Astrocyte of the cerebellum (primary cell): ENCODE measurements at regions of chr19 and their contacts with region 1.

Region 1: GRCh38 chr19:11019824-11020223 is 59.0 kb downstream of the SMARCA4 start:
- DNase-seq: no peak
- H3K4me3 ChIP-seq: no peak overlapping the region
- CTCF ChIP-seq: no peak

Region 2: DNA sequence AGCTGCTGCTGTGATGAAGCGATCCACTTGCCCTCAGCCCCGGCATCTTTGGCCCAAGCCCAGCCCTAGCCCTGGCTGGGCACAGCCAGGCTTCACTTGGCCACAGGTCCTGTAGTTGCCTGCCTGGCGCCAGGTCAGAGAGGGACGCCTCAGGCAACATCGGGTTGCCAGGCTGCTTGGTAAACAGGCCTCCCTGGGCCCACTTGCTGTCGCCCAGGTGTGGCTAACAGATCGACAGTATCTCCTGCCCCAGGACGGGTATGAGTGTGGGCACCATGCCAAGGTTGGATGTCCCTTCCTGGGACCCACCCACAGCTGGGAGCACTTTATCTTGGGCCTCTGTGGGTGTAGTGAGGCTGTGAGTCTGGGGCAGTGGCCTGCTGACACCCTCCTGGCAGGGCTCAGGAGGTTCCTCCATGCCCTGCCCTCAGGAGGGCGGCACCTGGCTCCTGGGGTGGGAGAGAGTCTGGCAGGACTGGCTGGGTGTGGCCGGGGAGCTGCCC is 120.6 kb before region 1 on chr19:
- in situ Hi-C with region 1: loop called (anchors 10 kb)
- DNase-seq: no peak
- H3K4me3 ChIP-seq: no peak overlapping the region
- CTCF ChIP-seq: no peak

Region 3: DNA sequence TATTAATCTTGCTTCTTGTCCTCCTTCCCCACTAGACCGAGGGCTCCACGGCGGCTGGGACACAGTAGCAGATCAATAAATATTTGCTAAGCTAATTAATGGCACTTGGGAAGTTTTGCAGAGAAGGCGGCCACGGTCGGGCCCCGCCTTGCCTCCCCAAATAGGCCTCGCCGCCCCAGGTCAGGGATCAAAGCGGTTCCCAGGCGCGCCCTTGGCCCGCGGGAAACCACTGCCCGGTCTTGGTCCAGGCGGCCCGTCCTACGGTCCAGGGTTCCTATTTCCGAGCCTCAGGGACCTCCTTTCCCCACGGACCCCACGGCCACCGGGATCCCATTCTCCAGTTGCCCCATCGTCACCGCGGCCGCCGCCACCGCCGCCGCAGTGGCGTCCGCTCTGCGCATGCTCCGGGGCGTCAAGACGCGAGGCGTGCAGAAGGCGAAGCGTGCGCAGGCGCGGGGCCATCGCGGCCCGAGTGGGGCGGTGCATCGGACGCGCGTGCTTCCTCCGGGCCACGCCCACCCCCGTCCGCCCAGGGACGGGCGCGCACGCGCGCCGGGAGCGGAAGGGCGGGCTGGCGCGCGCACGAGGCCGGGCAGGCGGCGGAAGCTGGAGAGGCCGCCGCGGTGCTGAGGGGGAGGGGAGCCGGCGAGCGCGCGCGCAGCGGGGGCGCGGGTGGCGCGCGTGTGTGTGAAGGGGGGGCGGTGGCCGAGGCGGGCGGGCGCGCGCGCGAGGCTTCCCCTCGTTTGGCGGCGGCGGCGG is 59.3 kb before region 1 on chr19 and contains the start of gene SMARCA4:
- in situ Hi-C with region 1: loop called (anchors 10 kb)
- DNase-seq: peak; percentile 92
- H3K4me3 ChIP-seq: peak within 1 kb of the TSS; percentile 87
- CTCF ChIP-seq: no peak